Panc1 (cell line): ENCODE measurements at regions of chr9 and their contacts with region 1.

Region 1: GRCh38 chr9:85610074-85610860 is 131.5 kb downstream of the AGTPBP1 start:
- DNase-seq: peak; percentile 38
- ATAC-seq: peak; percentile 87
- H3K4me3 ChIP-seq: no peak overlapping the region
- H3K27ac ChIP-seq: no peak overlapping the region
- H3K4me1 ChIP-seq: no peaks in the 10 kb centered on the region
- H3K27me3 ChIP-seq: no peaks in the 10 kb centered on the region
- CTCF ChIP-seq: peak; percentile 71

Region 2: GRCh38 chr9:84397151-84397728 is 1213.0 kb before region 1 on chr9:
- CTCF ChIA-PET with region 1: interaction called, 14 read pairs
- POLR2A ChIA-PET with region 1: no interaction called
- in situ Hi-C with region 1: no loop called
- intact Hi-C with region 1: loop called (anchors 10 kb)
- DNase-seq: peak; percentile 36
- ATAC-seq: peak; percentile 93
- H3K4me3 ChIP-seq: no peak overlapping the region
- H3K27ac ChIP-seq: no peak overlapping the region
- H3K4me1 ChIP-seq: no peaks in the 10 kb centered on the region
- H3K27me3 ChIP-seq: no peaks in the 10 kb centered on the region
- CTCF ChIP-seq: peak; percentile 81

Region 3: GRCh38 chr9:84845956-84846900 is 764.0 kb before region 1 on chr9:
- CTCF ChIA-PET with region 1: interaction called, 10 read pairs
- POLR2A ChIA-PET with region 1: no interaction called
- in situ Hi-C with region 1: no loop called
- intact Hi-C with region 1: no loop called
- DNase-seq: no peak
- ATAC-seq: no peak
- H3K4me3 ChIP-seq: no peak overlapping the region
- H3K27ac ChIP-seq: no peak overlapping the region
- H3K4me1 ChIP-seq: no peaks in the 10 kb centered on the region
- H3K27me3 ChIP-seq: no peaks in the 10 kb centered on the region
- CTCF ChIP-seq: no peak

Region 4: DNA sequence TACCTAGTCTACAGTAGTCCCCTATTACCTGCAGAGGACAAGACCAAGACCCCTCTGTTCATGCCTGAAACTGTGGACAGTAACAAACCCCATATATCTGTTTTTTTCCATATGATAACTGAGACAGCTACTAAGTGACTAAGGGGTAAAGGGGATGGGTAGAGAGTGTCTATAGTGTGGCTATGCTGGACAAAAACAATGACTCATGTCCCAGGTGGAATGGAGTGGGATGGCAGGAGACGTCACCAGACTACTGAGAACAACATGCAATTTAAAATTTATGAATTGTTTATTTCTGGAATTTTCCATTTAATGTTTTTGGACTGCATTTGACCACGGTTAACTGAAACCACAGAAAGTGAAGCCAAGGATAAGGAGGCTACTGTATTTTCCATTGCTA is 40.3 kb before region 1 on chr9:
- CTCF ChIA-PET with region 1: no interaction called
- POLR2A ChIA-PET with region 1: no interaction called
- in situ Hi-C with region 1: no loop called
- intact Hi-C with region 1: no loop called
- DNase-seq: no peak
- ATAC-seq: no peak
- H3K4me3 ChIP-seq: no peak overlapping the region
- H3K27ac ChIP-seq: no peak overlapping the region
- H3K4me1 ChIP-seq: no peaks in the 10 kb centered on the region
- H3K27me3 ChIP-seq: no peaks in the 10 kb centered on the region
- CTCF ChIP-seq: no peak